ENCODE measurements at regions of chrX and their contacts with region 1.

Region 1: DNA sequence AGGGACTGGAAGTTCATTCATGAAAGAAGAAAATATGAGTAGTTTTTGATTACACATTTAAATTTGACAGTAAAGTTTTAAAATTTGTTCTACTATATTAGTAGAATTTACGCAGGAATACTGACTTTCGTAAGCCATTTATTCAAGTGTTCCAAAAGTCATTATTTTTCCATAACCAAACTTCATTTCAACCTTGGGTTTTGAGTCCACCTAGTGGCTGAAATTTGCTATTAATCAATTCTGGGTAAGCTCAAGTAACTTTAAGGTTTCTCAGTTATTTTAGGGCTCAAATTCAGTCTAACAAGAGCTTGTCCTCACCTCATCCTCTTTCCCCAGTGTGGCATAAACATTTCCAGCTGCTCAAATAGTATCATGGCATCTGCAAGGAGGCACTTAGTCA is 175.4 kb downstream of the SH3BGRL start:
- DNase-seq: no peak
- ATAC-seq: no peak
- H3K4me3 ChIP-seq: no peak overlapping the region
- H3K27ac ChIP-seq: no peak overlapping the region
- H3K4me1 ChIP-seq: no peaks in the 10 kb centered on the region
- H3K27me3 ChIP-seq: no peaks in the 10 kb centered on the region
- CTCF ChIP-seq: peak; percentile 25 to 63 (median 51)
- POLR2A ChIP-seq: no peak

Region 2: DNA sequence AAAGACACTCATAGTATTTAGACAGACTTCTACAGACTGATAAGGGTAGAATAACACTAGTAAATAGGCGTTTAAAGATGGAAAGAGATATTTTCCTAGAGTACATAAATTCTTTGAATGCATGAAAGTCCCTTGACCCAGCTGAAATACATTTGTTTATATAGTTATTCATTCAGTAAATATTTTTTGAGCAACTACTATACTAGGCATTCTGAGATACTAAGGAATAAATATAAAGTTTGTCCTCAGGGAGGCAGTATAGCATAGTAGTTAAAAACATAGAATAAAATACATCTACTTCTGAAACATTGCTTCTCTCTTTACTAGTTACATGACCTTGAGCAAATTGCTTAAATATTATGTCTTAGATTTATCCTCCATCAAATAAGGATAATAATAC is 203.0 kb before region 1 on chrX:
- intact Hi-C with region 1: loop called (anchors 10 kb)
- DNase-seq: no peak
- ATAC-seq: no peak
- H3K4me3 ChIP-seq: no peak overlapping the region
- H3K27ac ChIP-seq: no peak overlapping the region
- H3K4me1 ChIP-seq: no peaks in the 10 kb centered on the region
- H3K27me3 ChIP-seq: no peaks in the 10 kb centered on the region
- CTCF ChIP-seq: peak in 4 of 7 experiments; percentile 27 to 39 (median 32)
- POLR2A ChIP-seq: no peak

Measured in body of pancreas (tissue), 4 donors.